Sigmoid colon (tissue), 7 donors: ENCODE measurements at regions of chr2 and their contacts with region 1.

Region 1: GRCh38 chr2:37365669-37366068 is 21.2 kb downstream of the QPCT start:
- DNase-seq: no peak
- H3K4me3 ChIP-seq: no peak overlapping the region
- H3K27ac ChIP-seq: no peak overlapping the region
- H3K4me1 ChIP-seq: peaks cover 0 to 22% (median 11%) of the 10 kb centered on the region in 4 donors
- H3K27me3 ChIP-seq: no peaks in the 10 kb centered on the region
- CTCF ChIP-seq: no peak
- EP300 ChIP-seq: no peak
- POLR2A ChIP-seq: no peak

Region 2: DNA sequence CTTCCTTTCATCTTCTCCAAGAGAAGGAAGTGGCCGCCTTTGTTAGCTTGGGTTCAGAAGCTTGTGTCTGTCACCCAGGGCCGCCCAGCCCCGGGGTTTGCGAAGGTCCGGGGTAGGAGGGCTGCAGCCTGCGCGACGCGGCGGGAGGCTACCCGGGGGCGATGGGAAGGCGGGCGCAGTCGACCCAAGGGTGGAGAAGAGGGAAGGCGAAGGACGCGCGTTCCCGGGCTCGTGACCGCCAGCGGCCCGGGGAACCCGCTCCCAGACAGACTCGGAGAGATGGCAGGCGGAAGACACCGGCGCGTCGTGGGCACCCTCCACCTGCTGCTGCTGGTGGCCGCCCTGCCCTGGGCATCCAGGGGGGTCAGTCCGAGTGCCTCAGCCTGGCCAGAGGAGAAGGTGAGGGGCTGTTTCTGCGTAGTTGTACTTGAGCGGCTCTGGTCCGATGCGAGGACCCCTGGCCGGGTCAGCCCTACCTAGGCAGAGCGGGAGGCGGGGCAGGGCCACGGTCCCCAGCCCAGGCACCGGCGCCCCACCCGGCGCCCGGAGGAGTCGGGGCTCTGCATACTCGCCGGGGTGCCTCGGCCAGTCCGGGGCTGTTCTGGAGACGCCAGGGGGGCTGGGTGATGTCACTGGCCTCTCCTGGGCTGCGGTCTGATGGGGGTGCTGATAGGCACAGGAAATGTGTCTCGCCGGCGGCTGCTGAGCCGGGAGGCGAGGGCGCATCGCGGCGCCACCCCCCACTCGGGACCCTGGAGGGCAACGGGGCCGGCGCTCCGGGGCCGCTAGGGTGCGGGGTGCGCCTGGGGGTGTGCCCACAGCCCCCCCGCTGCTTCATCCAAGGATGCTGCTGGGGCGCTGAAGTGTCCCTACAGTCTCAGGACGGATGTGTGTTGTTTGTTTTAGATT is 21.0 kb before region 1 on chr2 and contains the start of gene QPCT:
- intact Hi-C with region 1: loop called (anchors 2 kb)
- DNase-seq: peak; percentile 87
- H3K4me3 ChIP-seq: peak within 1 kb of the TSS; percentile 63 to 77 (median 70)
- H3K27ac ChIP-seq: peak within 1 kb of the TSS in 3 of 4 donors; percentile 85 to 95 (median 85)
- H3K4me1 ChIP-seq: peaks cover 0 to 39% (median 22%) of the 10 kb centered on the region in 4 donors
- H3K27me3 ChIP-seq: no peaks in the 10 kb centered on the region
- CTCF ChIP-seq: no peak
- EP300 ChIP-seq: no peak
- POLR2A ChIP-seq: peak in 1 of 2 donors; percentile 26
- total RNA-seq, gene QPCT: 65.8 to 94.9 (median 75.0) TPM